Gastrocnemius medialis (tissue), 4 donors: ENCODE measurements at regions of chr12 and their contacts with region 1.

Region 1: GRCh38 chr12:92570056-92570753 is 132.6 kb upstream of the PLEKHG7 start:
- DNase-seq: peak; percentile 28 to 34
- ATAC-seq: peak; percentile 58 to 73
- H3K4me3 ChIP-seq: peak overlapping the region in 1 of 4 donors; percentile 6
- H3K27ac ChIP-seq: peak overlapping the region in 3 of 4 donors; percentile 5 to 20 (median 10)
- H3K4me1 ChIP-seq: peaks cover 9 to 17% of the 10 kb centered on the region in 2 donors
- H3K27me3 ChIP-seq: no peaks in the 10 kb centered on the region
- CTCF ChIP-seq: peak; percentile 56 to 81 (median 77)
- POLR2A ChIP-seq: no peak

Region 2: DNA sequence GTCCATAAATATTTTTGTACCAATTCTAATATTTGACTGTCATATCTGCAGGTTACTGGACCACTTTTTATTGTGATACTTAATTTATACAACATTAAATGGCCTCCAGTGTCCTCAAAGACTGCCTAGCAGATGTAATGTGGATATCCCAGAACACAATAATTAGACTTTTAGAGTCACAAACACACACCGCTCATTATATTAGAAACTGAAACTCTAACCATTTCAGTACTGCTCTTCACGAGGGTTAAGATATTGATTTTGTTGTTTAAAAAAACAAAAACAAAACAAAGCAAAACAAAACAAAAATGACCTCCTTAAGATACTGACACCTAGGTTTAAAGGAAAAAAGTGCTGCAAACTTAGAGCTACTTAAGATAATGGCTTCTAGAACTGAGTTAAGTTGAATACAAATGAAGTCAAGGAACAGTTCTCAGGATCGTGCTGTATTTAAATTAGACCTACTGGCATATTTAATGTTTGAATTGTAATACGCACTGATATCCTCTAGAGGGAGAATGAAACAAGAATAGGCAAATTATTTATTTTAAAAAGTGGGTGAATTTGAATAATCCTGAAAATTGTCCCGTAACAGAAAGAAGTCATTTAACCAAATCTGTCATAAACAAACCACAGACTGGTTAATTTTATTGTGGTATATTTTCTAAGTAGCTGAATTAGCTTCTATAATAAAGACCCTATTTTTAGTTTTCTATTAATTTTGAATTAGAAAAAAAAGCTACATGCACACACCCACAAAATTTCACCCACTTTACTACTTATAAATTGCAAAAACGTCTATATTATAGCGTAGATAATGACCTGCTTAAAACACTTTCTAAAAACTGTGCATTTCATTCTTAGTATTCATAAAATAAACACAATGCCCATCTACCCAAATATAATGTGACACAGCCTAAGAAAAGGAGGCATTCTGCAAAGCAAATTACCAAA is 992.3 kb before region 1 on chr12:
- in situ Hi-C with region 1: loop called in 1 of 4 experiments (anchors 25 kb)
- intact Hi-C with region 1: loop called (anchors 10 kb)
- DNase-seq: no peak
- ATAC-seq: no peak
- H3K4me3 ChIP-seq: peak overlapping the region; percentile 19 to 52 (median 27)
- H3K27ac ChIP-seq: peak overlapping the region in 2 of 4 donors; percentile 5 to 36
- H3K4me1 ChIP-seq: peaks cover 9 to 10% of the 10 kb centered on the region in 2 donors
- H3K27me3 ChIP-seq: no peaks in the 10 kb centered on the region
- CTCF ChIP-seq: peak; percentile 31 to 65 (median 53)
- POLR2A ChIP-seq: no peak

Region 3: DNA sequence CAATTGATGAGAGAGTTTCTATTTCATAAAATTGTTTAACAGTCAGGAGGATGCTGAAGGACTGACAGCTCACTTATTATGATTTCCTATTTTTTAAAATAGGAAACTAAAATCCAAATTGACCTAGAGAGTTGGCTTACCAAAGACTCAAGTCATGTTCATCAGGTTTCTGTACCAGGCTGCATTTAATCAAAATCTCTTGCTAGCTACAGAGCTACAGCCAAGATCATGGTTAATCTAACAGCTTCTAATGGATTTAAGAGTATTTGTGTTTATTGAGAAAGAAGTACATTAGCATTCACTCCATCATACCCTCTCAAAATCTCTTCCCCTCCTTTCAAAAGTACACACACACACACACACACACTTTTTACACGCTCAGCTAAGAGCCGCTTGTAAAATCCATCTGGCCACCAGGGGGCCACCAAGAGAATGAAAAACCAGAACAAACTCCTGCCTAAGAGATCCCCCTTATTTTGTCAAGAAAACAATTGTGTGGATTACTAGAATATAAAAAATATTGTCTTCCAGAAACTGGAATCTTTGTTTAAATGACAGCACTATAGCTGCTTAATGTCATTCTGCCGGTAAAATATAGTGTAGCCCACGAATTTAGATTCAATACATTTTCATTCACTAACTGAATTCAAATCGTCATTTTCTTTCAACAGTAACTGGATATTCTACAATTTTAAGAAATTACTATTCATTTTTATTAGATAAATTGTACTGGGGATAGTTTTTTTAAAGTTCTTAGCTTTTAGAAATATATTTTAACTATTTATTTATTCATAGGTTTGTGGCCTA is 758.5 kb before region 1 on chr12:
- in situ Hi-C with region 1: loop called (anchors 5 to 25 kb)
- intact Hi-C with region 1: loop called (anchors 1 kb)
- DNase-seq: peak; percentile 19 to 27
- ATAC-seq: peak; percentile 50 to 60
- H3K4me3 ChIP-seq: no peak overlapping the region
- H3K27ac ChIP-seq: no peak overlapping the region
- H3K4me1 ChIP-seq: no peaks in the 10 kb centered on the region
- H3K27me3 ChIP-seq: no peaks in the 10 kb centered on the region
- CTCF ChIP-seq: peak; percentile 61 to 75 (median 68)
- POLR2A ChIP-seq: no peak

Region 4: DNA sequence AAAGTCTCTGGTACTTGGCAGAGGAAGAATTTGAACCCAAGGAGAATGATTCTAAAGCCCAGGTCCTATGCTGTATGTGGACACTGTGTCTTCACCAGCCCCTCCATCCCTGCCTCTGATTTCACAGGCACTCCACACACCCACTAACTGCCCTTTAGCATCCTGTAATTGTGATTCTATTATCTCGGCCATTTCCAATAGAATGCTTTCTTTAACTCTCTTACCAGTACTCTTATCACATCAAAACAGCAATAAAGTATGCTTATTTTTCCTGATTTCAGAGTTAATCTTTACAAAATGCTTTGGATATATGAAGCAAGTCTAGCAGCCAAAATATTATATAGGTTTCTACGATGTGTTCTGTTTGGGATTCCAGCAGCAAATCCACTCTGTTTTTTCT is 386.6 kb before region 1 on chr12:
- in situ Hi-C with region 1: no loop called
- intact Hi-C with region 1: no loop called
- DNase-seq: no peak
- ATAC-seq: no peak
- H3K4me3 ChIP-seq: no peak overlapping the region
- H3K27ac ChIP-seq: no peak overlapping the region
- H3K4me1 ChIP-seq: no peaks in the 10 kb centered on the region
- H3K27me3 ChIP-seq: no peaks in the 10 kb centered on the region
- CTCF ChIP-seq: no peak
- POLR2A ChIP-seq: no peak

Region 5: DNA sequence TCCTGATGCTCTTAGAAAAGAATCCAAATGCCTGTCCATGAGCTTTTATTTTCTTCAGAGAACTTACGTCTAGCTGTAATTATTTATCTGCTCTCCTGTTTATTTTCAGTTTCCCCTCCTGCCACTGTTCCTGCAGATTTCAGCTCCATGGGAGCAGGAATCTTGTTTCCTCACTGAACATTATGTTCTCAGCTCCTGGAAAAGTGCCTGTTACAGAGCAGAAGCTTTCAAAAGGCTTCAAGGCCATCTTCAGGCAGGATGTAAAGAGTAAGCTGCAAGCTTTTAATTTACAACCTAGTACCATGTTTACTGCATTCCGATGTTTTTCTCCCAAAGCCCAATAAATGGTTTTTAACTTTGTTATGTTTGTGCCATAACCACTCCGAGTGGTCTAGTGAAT is 326.2 kb before region 1 on chr12:
- in situ Hi-C with region 1: no loop called
- intact Hi-C with region 1: loop called (anchors 5 kb)
- DNase-seq: peak; percentile 28 to 55
- ATAC-seq: peak; percentile 94 to 95
- H3K4me3 ChIP-seq: peak overlapping the region in 2 of 4 donors; percentile 10 to 16
- H3K27ac ChIP-seq: peak overlapping the region; percentile 64 to 82 (median 72)
- H3K4me1 ChIP-seq: peaks cover 11 to 21% of the 10 kb centered on the region in 2 donors
- H3K27me3 ChIP-seq: no peaks in the 10 kb centered on the region
- CTCF ChIP-seq: peak in 1 of 5 experiments; percentile 23
- POLR2A ChIP-seq: no peak

Region 6: DNA sequence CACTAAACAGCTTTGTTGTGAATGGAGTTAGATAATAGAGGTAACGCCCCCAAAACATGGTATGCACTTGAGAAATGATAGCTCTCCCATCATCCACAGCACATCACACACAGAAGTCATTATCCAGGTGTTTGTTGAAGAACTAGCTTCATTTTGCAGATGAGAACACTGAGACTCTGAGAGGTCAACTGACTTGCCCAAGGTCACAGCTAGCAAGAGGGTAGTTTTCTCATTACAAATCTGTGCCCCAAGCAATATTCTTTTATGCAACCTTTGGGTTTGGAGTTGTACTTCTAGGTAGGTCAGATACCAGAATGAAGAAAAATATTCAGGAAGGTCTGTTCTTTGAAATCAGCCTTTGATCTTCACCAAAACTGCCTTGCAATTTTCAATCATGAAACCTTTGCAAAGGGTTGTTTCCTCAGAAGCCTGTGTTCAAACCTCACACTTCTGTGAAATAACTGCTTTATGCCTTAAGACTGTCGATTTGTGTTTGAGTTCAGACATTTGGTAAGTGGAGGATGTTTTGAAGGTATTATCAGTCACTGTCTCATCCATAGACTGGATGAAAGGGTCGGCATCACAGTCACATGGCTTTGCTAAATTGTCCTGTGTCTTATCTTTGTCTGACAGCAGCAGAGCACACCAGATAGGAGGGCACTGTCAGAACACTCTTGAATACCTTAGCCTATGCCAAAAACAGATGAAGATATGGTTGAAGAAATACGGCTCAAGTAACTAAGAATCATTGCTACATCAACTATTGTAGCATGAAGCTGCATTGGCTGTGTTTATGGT is 191.3 kb before region 1 on chr12:
- in situ Hi-C with region 1: no loop called
- intact Hi-C with region 1: no loop called
- DNase-seq: no peak
- ATAC-seq: no peak
- H3K4me3 ChIP-seq: no peak overlapping the region
- H3K27ac ChIP-seq: no peak overlapping the region
- H3K4me1 ChIP-seq: peaks cover 0 to 4% of the 10 kb centered on the region in 2 donors
- H3K27me3 ChIP-seq: no peaks in the 10 kb centered on the region
- CTCF ChIP-seq: no peak
- POLR2A ChIP-seq: no peak

Region 7: DNA sequence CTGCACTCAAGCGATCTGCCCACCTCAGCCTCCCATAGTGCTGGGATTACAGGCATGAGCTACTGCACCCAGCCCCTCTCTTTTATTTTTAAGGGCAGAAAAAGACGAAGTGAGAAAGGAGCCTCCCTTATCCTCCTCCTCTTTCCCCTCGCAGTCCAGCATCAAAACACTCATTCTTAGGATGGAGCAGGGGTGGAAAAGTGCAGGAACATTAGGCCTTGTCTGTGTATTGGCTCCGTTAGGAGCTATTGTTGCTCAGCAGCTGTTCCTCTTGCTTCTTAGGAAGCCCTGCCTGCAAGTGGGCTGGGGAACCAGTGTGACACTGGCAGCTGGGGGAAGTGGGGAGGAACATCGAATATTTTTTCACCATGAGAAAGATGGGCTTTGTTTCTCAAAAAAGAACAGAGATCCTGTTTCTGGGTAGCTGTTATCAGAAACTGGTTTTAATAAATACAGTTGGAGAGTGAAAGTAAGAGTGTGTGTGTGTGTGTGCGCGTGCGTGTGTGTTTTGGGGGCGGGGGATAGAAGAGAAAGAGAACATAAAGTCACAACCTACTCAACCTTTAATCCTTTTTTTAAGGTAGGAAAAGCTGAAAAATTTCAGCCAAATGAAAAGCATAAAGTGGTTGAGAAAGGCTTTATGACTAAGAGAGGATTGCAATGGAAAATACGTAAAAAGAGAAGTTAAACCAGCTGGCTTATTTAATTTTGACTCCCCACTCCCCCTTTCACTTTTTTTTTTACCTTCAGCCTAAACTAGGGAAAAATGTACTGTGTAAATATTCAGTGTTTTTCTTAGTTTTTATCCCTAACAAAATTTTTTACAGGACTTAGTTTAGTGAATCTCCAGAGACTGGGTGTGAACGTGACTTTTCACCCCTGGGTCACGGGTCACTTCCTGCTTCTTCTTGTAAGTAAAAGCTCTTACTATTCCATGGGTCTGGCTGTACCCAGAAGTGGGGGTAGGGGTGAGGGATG is 64.7 kb before region 1 on chr12:
- in situ Hi-C with region 1: no loop called
- intact Hi-C with region 1: loop called (anchors 5 kb)
- DNase-seq: peak in 1 of 2 donors; percentile 39
- ATAC-seq: peak; percentile 27 to 48
- H3K4me3 ChIP-seq: peak overlapping the region; percentile 0 to 18 (median 8)
- H3K27ac ChIP-seq: peak overlapping the region; percentile 51 to 74 (median 70)
- H3K4me1 ChIP-seq: peaks cover 46 to 48% of the 10 kb centered on the region in 2 donors
- H3K27me3 ChIP-seq: no peaks in the 10 kb centered on the region
- CTCF ChIP-seq: no peak
- POLR2A ChIP-seq: no peak